ENCODE measurements at regions of chrX and their contacts with region 1.

Region 1: DNA sequence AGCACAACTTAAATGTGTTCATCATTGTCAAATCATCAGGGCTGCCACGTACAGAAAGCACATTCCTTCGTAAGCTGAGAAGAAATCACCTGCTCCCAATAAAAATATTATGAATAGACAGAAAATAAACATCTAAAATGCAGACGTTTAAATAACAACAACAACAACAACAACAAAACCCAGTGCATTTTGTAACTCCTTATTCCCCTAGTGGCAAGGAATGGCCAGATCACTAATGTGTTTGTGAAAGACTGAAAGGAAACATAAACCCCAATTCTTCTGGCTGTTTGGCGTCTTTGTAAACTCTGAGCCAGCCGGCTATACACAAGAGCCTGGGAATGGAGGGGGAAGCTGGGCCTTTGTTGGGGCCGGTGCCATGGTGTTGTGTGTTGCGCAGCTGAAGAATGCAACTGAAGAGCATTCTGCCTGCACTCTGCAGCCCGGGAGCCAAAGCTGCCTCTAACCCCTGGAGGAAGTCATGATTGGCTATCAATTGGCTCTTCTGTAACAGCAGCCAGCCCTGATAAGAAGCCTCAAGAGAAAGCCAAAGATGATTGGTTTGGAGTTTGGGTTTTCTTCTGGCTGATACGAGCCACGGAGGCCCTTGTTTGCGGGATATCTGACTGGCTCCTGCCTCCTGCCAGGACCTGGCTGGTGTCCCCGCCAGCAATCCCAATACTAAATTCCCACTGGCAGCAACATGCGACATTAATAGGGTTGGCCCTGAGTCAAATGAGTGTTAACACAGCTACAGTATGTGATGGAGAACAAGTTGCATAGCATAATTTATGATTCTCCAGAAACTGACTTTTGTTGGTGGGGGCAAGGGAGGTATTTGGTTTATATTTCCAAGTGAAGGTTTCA is 89.7 kb upstream of the TFDP3 start:
- DNase-seq: no peak
- H3K4me3 ChIP-seq: peak overlapping the region in 1 of 2 donors; percentile 19
- H3K27ac ChIP-seq: no peak overlapping the region
- H3K4me1 ChIP-seq: peaks cover 0 to 4% of the 10 kb centered on the region in 2 donors
- H3K27me3 ChIP-seq: no peaks in the 10 kb centered on the region
- CTCF ChIP-seq: no peak

Region 2: GRCh38 chrX:133265331-133265730 is 42.5 kb before region 1 on chrX:
- intact Hi-C with region 1: loop called (anchors 5 kb)
- DNase-seq: no peak
- H3K4me3 ChIP-seq: no peak overlapping the region
- H3K27ac ChIP-seq: no peak overlapping the region
- H3K4me1 ChIP-seq: no peaks in the 10 kb centered on the region
- H3K27me3 ChIP-seq: no peaks in the 10 kb centered on the region
- CTCF ChIP-seq: no peak

Region 3: DNA sequence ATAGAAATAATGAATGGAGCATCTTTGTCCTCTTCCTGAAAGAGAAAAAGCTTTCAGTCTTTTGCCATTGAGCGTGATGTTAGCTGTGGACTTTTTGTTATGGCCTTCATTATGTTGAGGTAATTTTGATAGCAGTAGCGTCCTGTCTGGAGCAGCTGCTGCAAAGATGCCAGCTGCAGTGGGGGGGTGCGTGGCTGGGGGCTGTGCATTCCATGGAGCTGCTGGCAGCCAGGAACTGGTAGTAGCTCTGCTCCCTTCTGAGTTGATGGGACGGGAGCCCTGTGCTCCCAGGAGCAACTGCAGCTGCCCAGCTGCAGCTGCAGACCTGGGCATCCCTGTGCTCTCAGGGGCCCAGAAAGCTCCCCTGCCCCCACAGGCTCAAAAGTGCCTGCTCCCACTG is 979.5 kb after region 1 on chrX:
- intact Hi-C with region 1: no loop called
- DNase-seq: no peak
- H3K4me3 ChIP-seq: no peak overlapping the region
- H3K27ac ChIP-seq: no peak overlapping the region
- H3K4me1 ChIP-seq: no peaks in the 10 kb centered on the region
- H3K27me3 ChIP-seq: no peaks in the 10 kb centered on the region
- CTCF ChIP-seq: no peak

Measured in ascending aorta (tissue), 2 donors.